Activated T-helper 2 cell treated with anti-CD3 and anti-CD28 coated beads, Interferon-gamma antibody, Interleukin-2, Interleukin-4, amounts not matched to agents 10 μg/mL and 5 μg/mL and 100 μg/mL, durations not matched to agents 14 hours and 24 hours and 36 hours (primary cell): ENCODE measurements at regions of chr21 and their contacts with region 1.

Region 1: DNA sequence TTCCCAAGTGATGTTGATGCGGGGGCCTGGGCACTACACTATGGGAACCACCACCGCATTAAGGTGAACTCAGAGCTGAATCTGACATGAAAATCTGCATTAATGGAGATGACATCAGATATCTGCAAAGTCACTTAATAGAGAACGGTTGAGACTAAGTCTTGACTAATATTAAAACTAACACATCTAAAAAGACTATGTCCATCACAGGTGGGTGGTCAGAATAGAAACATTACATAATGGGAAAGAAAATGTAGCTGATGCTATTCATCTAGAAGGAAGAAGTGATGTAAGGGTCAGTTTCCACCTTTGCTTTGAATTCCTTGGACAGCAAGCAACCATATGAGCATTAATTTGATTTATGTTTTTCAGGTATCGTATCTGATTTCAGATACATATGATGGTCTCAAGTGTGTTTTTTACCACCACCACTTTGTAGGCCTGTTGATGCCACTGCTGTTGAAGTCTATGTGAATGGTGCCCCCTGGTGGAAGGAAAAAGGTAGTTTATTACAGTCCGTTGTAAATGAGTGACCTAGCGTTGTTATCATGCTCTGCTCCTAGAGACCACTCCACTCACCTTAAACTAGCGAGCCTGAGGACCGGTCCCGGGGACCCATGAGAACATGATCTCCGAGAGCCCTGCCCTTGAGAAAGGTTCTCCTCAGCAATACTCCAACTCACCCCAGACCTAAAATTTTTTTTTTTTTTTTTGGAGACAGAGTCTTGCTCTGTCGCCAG is 73.5 kb downstream of the BACH1 start:
- DNase-seq: peak; percentile 36
- H3K4me3 Mint-ChIP-seq: no peak overlapping the region
- H3K27ac Mint-ChIP-seq: peak overlapping the region; percentile 44
- H3K4me1 Mint-ChIP-seq: peaks cover 25% of the 10 kb centered on the region
- H3K27me3 Mint-ChIP-seq: no peaks in the 10 kb centered on the region

Region 2: DNA sequence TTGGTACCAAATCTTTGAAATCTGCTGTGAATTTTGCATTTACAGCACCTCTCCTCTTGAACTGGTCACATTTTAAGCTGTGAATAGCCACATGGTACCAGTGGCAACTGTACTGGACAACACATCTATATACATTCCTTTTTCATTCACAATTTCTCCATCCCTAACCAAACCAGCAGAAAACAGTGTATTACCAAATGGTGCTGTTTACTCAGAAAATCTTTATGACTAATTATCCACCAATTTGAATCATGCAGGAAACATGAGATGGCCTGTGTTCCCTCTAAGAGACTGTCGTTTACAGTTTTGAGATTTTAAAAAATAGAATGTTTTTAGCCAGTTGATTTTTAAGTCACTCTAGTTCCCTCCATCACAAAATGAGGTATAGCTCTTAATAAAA is 281.2 kb before region 1 on chr21:
- intact Hi-C with region 1: loop called (anchors 1 kb)
- DNase-seq: no peak
- H3K4me3 Mint-ChIP-seq: no peak overlapping the region
- H3K27ac Mint-ChIP-seq: no peak overlapping the region
- H3K4me1 Mint-ChIP-seq: peaks cover 30% of the 10 kb centered on the region
- H3K27me3 Mint-ChIP-seq: peaks cover 5% of the 10 kb centered on the region

Region 3: DNA sequence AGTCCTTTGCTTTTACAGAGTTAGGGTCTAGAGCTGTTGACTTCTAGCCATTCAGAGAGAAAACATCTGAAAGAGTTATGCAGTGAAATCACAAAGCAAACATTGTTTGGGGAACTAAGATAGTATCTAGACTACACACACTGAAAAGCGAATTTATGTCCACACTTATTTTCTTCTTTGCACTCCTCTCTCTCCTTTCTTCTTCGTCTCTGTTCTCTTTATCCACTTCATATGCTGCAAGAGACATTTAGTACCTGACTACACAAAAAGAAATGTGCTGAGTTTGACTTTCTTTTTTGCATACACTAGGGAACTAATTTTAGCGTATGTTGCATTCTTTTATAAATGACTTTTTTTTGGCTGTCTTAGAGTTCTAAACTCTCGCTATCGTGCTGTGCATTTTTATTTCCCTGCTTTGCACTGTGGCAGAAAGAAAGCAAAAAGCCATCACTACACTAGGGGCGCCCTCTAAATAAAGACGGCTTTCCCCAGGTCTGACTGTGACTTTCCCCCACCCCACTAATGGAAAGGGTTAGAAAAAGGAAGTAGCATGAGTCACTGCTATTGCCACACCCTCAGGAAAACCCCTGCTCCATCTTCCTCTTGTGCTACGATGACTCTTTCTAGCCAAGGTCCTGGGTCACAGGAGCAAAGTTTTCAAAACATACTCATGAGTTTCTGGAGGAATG is 176.1 kb before region 1 on chr21:
- intact Hi-C with region 1: loop called (anchors 2 kb)
- DNase-seq: peak; percentile 64
- H3K4me3 Mint-ChIP-seq: peak overlapping the region; percentile 80
- H3K27ac Mint-ChIP-seq: peak overlapping the region; percentile 80
- H3K4me1 Mint-ChIP-seq: peaks cover 32% of the 10 kb centered on the region
- H3K27me3 Mint-ChIP-seq: no peaks in the 10 kb centered on the region

Region 4: DNA sequence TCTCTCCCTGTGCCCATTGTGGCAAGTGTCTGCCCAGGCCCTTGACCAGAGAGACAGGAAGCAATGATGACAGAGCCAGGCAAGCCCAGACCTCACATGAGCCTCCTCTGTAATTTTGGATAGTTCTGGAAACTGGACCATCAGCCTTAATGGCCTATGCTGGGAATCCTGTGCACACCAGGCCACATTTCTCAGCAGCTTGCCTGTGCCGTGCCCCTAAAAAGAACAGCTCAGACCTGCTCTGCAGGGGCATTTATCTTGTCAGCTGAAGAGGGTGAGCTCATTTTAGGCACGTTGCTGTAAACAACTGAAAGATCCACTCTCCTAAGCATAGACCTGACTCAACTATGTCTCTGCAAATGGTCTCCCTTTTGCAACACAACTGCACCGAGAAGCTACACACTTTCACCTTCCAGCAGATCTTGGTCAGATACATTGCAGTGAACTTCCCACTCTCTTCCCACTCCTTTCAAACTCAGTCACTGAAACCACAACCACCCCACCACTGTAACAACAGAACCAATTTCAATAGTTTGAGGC is 127.1 kb before region 1 on chr21:
- intact Hi-C with region 1: loop called (anchors 1 kb)
- DNase-seq: no peak
- H3K4me3 Mint-ChIP-seq: no peak overlapping the region
- H3K27ac Mint-ChIP-seq: peak overlapping the region; percentile 17
- H3K4me1 Mint-ChIP-seq: peaks cover 9% of the 10 kb centered on the region
- H3K27me3 Mint-ChIP-seq: peaks cover 29% of the 10 kb centered on the region

Region 5: DNA sequence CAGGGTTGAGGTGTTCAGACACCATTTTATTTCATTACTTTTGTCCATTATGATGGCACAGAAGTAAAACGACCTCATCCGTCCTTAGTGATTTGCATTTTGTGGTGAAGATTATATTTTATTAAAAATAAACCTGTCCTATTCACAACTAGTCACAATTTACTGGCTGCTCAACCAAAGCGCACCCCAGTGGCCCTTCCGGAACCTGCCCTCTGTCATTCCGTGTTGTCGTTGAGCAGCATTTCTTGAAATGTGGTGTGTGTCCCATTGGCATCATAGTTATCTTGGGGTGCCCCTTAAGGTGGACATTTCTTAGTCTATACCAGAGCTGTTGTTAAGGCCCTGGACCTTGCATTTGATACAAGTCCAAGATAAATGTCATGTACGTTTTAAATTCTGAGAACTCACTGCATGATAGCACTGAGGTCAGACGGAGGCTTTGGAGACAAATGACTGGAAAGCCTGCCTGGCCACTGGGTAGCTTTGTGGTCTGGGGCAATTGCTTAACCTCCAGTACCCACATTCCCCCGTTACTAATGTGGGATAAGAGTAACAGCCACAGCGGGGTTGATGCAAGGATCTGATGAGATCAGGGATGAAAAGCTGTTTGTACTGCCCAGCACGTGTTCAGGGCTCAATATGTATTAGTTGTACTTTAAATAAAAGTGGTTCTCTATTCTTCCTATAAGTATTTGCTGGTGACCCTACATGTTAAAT is 37.4 kb before region 1 on chr21:
- intact Hi-C with region 1: loop called (anchors 5 kb)
- DNase-seq: no peak
- H3K4me3 Mint-ChIP-seq: no peak overlapping the region
- H3K27ac Mint-ChIP-seq: peak overlapping the region; percentile 3
- H3K4me1 Mint-ChIP-seq: peaks cover 25% of the 10 kb centered on the region
- H3K27me3 Mint-ChIP-seq: no peaks in the 10 kb centered on the region

Region 6: DNA sequence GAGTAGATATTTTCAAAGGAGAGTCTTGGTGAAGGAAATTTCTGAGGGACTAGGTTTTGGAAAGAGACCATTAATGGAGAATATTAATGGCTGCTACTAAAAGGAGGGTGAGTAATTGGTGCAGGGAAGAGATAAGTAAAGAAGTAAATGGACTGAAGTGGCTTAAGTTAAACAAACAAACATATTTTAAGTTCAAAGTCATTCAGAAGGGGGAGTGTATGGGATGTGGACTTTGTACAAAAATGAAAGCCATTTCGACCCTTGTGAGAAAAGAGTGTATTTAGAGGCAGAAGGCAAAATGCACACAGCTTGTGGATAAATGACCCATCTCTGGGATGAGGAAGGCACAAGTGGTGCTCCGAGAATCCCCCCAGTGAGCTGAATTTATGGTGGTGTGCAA is 98.2 kb after region 1 on chr21:
- intact Hi-C with region 1: no loop called
- DNase-seq: no peak
- H3K4me3 Mint-ChIP-seq: no peak overlapping the region
- H3K27ac Mint-ChIP-seq: no peak overlapping the region
- H3K4me1 Mint-ChIP-seq: no peaks in the 10 kb centered on the region
- H3K27me3 Mint-ChIP-seq: no peaks in the 10 kb centered on the region